ENCODE measurements at regions of chr3 and their contacts with region 1.

Region 1: GRCh38 chr3:141441381-141442364 is 45.2 kb upstream of the RASA2 start:
- DNase-seq: peak; percentile 27 to 84 (median 65)
- ATAC-seq: peak; percentile 98 to 100 (median 99)
- H3K4me3 ChIP-seq: no peak overlapping the region
- H3K4me3 Mint-ChIP-seq: no peak overlapping the region
- H3K27ac ChIP-seq: peak overlapping the region; percentile 36
- H3K27ac Mint-ChIP-seq: peak overlapping the region; percentile 80 to 85
- H3K4me1 ChIP-seq: peaks cover 0 to 12% of the 10 kb centered on the region in 2 experiments
- H3K4me1 Mint-ChIP-seq: peaks cover 29 to 40% (median 33%) of the 10 kb centered on the region in 3 donors
- H3K27me3 ChIP-seq: no peaks in the 10 kb centered on the region
- H3K27me3 Mint-ChIP-seq: no peaks in the 10 kb centered on the region

Region 2: DNA sequence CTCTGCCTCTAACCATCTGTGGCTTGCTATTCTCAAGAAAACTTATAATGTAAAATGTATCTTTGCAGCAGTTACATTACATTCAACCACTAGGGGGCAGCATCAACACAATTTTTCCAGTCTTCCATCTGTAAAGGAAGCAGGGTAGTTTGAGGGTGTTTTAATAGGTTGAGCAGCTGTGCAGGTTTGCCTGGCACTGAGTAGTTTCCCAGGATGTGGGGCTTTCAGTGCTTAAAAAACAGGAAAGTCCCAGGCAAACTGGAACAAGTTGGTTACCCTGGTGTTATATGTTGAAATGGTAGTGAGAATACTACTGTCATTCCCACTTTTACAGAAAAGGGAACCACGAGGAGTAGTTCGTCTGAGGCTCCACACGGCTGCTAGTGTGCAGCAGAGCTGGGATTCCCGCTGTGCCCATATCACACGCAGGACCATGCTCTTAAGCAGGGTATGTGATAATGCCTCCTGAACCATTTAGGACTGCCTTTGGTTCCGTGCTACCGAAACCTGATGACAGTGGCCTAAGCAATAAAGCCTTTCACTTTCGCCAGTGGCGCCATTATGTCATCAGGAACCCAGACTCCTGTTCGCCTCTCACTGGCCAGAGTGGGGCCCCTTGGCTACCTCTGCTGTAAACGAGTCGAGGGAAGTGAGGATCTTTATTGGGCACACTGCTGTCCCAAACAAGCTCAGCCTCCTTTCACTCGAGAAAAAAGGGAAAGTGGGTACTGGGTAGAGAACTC is 138.0 kb before region 1 on chr3:
- CTCF ChIA-PET with region 1: interaction called, 7 to 15 read pairs
- POLR2A ChIA-PET with region 1: interaction called in 1 of 2 experiments, 3 read pairs
- DNase-seq: peak in 27 of 35 experiments; percentile 19 to 89 (median 50)
- ATAC-seq: peak; percentile 27 to 48 (median 37)
- H3K4me3 ChIP-seq: no peak overlapping the region
- H3K4me3 Mint-ChIP-seq: no peak overlapping the region
- H3K27ac ChIP-seq: no peak overlapping the region
- H3K27ac Mint-ChIP-seq: peak overlapping the region in 1 of 2 donors; percentile 39
- H3K4me1 ChIP-seq: peaks cover 23 to 48% of the 10 kb centered on the region in 2 experiments
- H3K4me1 Mint-ChIP-seq: peaks cover 57 to 78% (median 68%) of the 10 kb centered on the region in 3 donors
- H3K27me3 ChIP-seq: no peaks in the 10 kb centered on the region
- H3K27me3 Mint-ChIP-seq: no peaks in the 10 kb centered on the region

Region 3: GRCh38 chr3:141370065-141370533 is 71.6 kb before region 1 on chr3:
- CTCF ChIA-PET with region 1: interaction called, 5 to 31 read pairs
- POLR2A ChIA-PET with region 1: interaction called in 1 of 2 experiments, 3 read pairs
- DNase-seq: peak in 34 of 35 experiments; percentile 23 to 92 (median 58)
- ATAC-seq: peak; percentile 99 to 100 (median 100)
- H3K4me3 ChIP-seq: no peak overlapping the region
- H3K4me3 Mint-ChIP-seq: no peak overlapping the region
- H3K27ac ChIP-seq: no peak overlapping the region
- H3K27ac Mint-ChIP-seq: peak overlapping the region; percentile 4 to 37
- H3K4me1 ChIP-seq: no peaks in the 10 kb centered on the region
- H3K4me1 Mint-ChIP-seq: peaks cover under 1 to 7% (median 5%) of the 10 kb centered on the region in 3 donors
- H3K27me3 ChIP-seq: no peaks in the 10 kb centered on the region
- H3K27me3 Mint-ChIP-seq: no peaks in the 10 kb centered on the region

Measured in T-cell (primary cell).